B cell (primary cell): ENCODE measurements at regions of chr10 and their contacts with region 1.

Region 1: GRCh38 chr10:31808258-31809218 is 120.1 kb downstream of the ARHGAP12 start:
- DNase-seq: peak; percentile 71
- ATAC-seq: no peak
- H3K4me3 ChIP-seq: no peak overlapping the region
- H3K4me3 Mint-ChIP-seq: no peak overlapping the region
- H3K27ac ChIP-seq: no peak overlapping the region
- H3K27ac Mint-ChIP-seq: no peak overlapping the region
- H3K4me1 ChIP-seq: peaks cover 0 to 3% of the 10 kb centered on the region in 2 donors
- H3K4me1 Mint-ChIP-seq: peaks cover 3% of the 10 kb centered on the region
- H3K27me3 ChIP-seq: no peaks in the 10 kb centered on the region
- H3K27me3 Mint-ChIP-seq: no peaks in the 10 kb centered on the region
- CTCF ChIP-seq: peak; percentile 78

Region 2: DNA sequence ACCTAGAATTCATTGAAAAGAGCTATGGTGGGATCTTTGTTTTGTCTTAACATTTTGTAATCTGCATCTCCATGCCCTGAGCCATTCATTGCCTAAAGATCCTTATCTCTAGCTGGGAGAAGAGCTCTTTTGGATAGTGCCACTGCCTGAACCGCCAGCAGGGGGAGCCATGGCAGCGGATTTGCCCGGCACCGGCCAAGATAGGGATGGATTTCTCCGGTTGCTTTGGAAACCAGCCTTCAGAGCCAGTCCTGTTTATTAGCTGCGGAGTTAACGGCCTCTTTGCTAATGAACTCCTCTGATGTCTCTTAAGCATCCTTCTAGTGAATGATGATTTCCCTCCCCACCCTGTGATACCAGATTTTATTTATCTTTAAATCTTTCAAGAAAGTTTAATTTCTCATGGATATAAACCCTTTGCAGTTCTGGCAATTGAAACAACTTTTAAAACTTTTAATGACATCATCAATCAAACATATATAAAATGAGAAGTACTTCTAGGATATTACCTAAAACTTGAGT is 1120.8 kb before region 1 on chr10:
- CTCF ChIA-PET with region 1: interaction called, 23 read pairs
- POLR2A ChIA-PET with region 1: no interaction called
- intact Hi-C with region 1: loop called (anchors 1 kb)
- DNase-seq: peak; percentile 72
- ATAC-seq: peak; percentile 67
- H3K4me3 ChIP-seq: no peak overlapping the region
- H3K4me3 Mint-ChIP-seq: no peak overlapping the region
- H3K27ac ChIP-seq: no peak overlapping the region
- H3K27ac Mint-ChIP-seq: no peak overlapping the region
- H3K4me1 ChIP-seq: peaks cover 0 to 3% of the 10 kb centered on the region in 2 donors
- H3K4me1 Mint-ChIP-seq: no peaks in the 10 kb centered on the region
- H3K27me3 ChIP-seq: peaks cover 0 to 18% (median 9%) of the 10 kb centered on the region in 4 experiments
- H3K27me3 Mint-ChIP-seq: peaks cover 41% of the 10 kb centered on the region
- CTCF ChIP-seq: peak; percentile 98

Region 3: GRCh38 chr10:30722956-30723620 is 1085.5 kb before region 1 on chr10:
- CTCF ChIA-PET with region 1: interaction called, 30 read pairs
- POLR2A ChIA-PET with region 1: no interaction called
- intact Hi-C with region 1: no loop called
- DNase-seq: no peak
- ATAC-seq: peak; percentile 11
- H3K4me3 ChIP-seq: no peak overlapping the region
- H3K4me3 Mint-ChIP-seq: no peak overlapping the region
- H3K27ac ChIP-seq: no peak overlapping the region
- H3K27ac Mint-ChIP-seq: no peak overlapping the region
- H3K4me1 ChIP-seq: peaks cover 6 to 7% of the 10 kb centered on the region in 2 donors
- H3K4me1 Mint-ChIP-seq: peaks cover 19% of the 10 kb centered on the region
- H3K27me3 ChIP-seq: peaks cover 0 to 20% (median 3%) of the 10 kb centered on the region in 4 experiments
- H3K27me3 Mint-ChIP-seq: peaks cover 43% of the 10 kb centered on the region
- CTCF ChIP-seq: no peak

Region 4: GRCh38 chr10:30783939-30784500 is 1024.5 kb before region 1 on chr10:
- CTCF ChIA-PET with region 1: interaction called, 49 read pairs
- POLR2A ChIA-PET with region 1: no interaction called
- intact Hi-C with region 1: no loop called
- DNase-seq: peak; percentile 82
- ATAC-seq: peak; percentile 80
- H3K4me3 ChIP-seq: peak overlapping the region; percentile 42 to 80 (median 63)
- H3K4me3 Mint-ChIP-seq: peak overlapping the region; percentile 77
- H3K27ac ChIP-seq: no peak overlapping the region
- H3K27ac Mint-ChIP-seq: no peak overlapping the region
- H3K4me1 ChIP-seq: peaks cover 0 to 16% of the 10 kb centered on the region in 2 donors
- H3K4me1 Mint-ChIP-seq: peaks cover 11% of the 10 kb centered on the region
- H3K27me3 ChIP-seq: peaks cover 0 to 16% (median 4%) of the 10 kb centered on the region in 4 experiments
- H3K27me3 Mint-ChIP-seq: peaks cover 10% of the 10 kb centered on the region
- CTCF ChIP-seq: peak; percentile 73

Region 5: GRCh38 chr10:31083765-31084184 is 724.8 kb before region 1 on chr10:
- CTCF ChIA-PET with region 1: no interaction called
- POLR2A ChIA-PET with region 1: no interaction called
- intact Hi-C with region 1: loop called (anchors 5 kb)
- DNase-seq: peak; percentile 39
- ATAC-seq: peak; percentile 17
- H3K4me3 ChIP-seq: no peak overlapping the region
- H3K4me3 Mint-ChIP-seq: no peak overlapping the region
- H3K27ac ChIP-seq: no peak overlapping the region
- H3K27ac Mint-ChIP-seq: no peak overlapping the region
- H3K4me1 ChIP-seq: no peaks in the 10 kb centered on the region
- H3K4me1 Mint-ChIP-seq: no peaks in the 10 kb centered on the region
- H3K27me3 ChIP-seq: no peaks in the 10 kb centered on the region
- H3K27me3 Mint-ChIP-seq: peaks cover 6% of the 10 kb centered on the region
- CTCF ChIP-seq: peak; percentile 29

Region 6: DNA sequence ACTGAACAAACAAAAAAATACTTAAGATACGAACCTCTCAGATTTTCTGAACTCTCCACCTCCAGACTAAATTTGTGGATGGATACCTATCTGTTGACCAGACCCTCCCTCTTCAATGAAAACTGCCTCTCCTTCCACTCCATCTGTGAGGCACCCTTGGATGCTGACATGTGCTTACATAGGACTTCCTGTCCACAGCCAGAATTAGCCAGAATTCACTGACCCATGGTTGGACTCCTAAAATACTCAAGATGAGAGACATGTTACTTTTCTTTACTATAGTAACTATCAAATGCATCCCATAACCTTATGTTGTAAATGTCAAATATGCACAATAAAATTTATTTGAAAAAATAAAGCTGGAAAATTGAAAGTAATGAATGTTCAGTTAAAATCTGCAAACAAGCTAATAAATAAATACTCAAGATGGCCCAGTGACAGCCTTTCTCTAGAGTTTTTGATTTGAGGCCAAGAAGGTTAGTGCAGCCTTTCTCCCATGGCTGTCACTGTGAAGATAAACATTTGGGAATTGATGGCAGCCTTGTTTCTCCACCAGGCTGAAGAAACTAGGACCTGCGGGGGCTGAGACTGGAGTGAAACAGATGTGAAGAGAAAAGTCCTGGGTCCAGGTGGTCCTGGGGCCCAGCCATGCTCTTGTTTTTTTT is 202.5 kb before region 1 on chr10:
- CTCF ChIA-PET with region 1: no interaction called
- POLR2A ChIA-PET with region 1: no interaction called
- intact Hi-C with region 1: no loop called
- DNase-seq: no peak
- ATAC-seq: no peak
- H3K4me3 ChIP-seq: no peak overlapping the region
- H3K4me3 Mint-ChIP-seq: no peak overlapping the region
- H3K27ac ChIP-seq: no peak overlapping the region
- H3K27ac Mint-ChIP-seq: no peak overlapping the region
- H3K4me1 ChIP-seq: peaks cover 12 to 16% of the 10 kb centered on the region in 2 donors
- H3K4me1 Mint-ChIP-seq: peaks cover 17% of the 10 kb centered on the region
- H3K27me3 ChIP-seq: peaks cover 0 to 18% (median 5%) of the 10 kb centered on the region in 4 experiments
- H3K27me3 Mint-ChIP-seq: peaks cover 18% of the 10 kb centered on the region
- CTCF ChIP-seq: no peak

Region 7: DNA sequence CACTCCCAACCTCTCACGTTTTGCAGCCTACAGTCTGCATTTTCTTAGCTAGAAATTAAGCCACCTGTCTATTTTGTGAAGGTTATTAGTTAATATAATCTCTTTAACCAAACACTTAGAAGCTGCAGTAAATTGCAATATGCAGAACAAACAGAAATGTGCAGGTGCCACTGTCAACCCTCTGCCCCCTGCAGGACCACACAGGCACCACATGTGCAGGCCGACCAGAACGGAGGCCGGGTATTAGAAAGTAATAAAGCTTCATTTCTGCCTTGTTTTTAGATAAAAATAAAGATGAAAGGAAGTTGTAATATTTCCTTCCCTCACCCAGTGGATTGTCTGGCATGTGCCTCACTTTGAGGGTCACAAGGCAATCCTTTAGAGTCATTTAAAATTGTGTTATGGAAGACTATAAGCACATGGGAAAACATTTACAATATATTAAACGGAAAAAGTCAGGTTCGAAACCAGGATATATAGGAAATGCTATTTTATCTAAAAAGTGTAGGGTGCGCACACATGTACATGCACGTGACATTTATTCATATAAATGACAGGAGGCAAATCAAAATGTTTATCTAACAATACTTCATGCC is 38.1 kb before region 1 on chr10:
- CTCF ChIA-PET with region 1: interaction called, 4 read pairs
- POLR2A ChIA-PET with region 1: interaction called, 5 read pairs
- intact Hi-C with region 1: loop called (anchors 1 kb)
- DNase-seq: peak; percentile 61
- ATAC-seq: peak; percentile 94
- H3K4me3 ChIP-seq: no peak overlapping the region
- H3K4me3 Mint-ChIP-seq: no peak overlapping the region
- H3K27ac ChIP-seq: no peak overlapping the region
- H3K27ac Mint-ChIP-seq: no peak overlapping the region
- H3K4me1 ChIP-seq: no peaks in the 10 kb centered on the region
- H3K4me1 Mint-ChIP-seq: no peaks in the 10 kb centered on the region
- H3K27me3 ChIP-seq: no peaks in the 10 kb centered on the region
- H3K27me3 Mint-ChIP-seq: no peaks in the 10 kb centered on the region
- CTCF ChIP-seq: peak; percentile 95

Region 8: GRCh38 chr10:31822151-31822550 is 13.6 kb after region 1 on chr10:
- CTCF ChIA-PET with region 1: interaction called, 10 read pairs
- POLR2A ChIA-PET with region 1: no interaction called
- intact Hi-C with region 1: no loop called
- DNase-seq: no peak
- ATAC-seq: no peak
- H3K4me3 ChIP-seq: no peak overlapping the region
- H3K4me3 Mint-ChIP-seq: no peak overlapping the region
- H3K27ac ChIP-seq: no peak overlapping the region
- H3K27ac Mint-ChIP-seq: no peak overlapping the region
- H3K4me1 ChIP-seq: no peaks in the 10 kb centered on the region
- H3K4me1 Mint-ChIP-seq: no peaks in the 10 kb centered on the region
- H3K27me3 ChIP-seq: no peaks in the 10 kb centered on the region
- H3K27me3 Mint-ChIP-seq: no peaks in the 10 kb centered on the region
- CTCF ChIP-seq: no peak